ENCODE measurements at regions of chr11 and their contacts with region 1.

Region 1: GRCh38 chr11:68010090-68011041 is at the start of gene ALDH3B1:
- DNase-seq: peak; percentile 97 to 100
- H3K4me3 ChIP-seq: peak within 1 kb of the TSS; percentile 49 to 54
- H3K27ac ChIP-seq: peak within 1 kb of the TSS; percentile 93 to 94
- H3K4me1 ChIP-seq: peaks cover 4 to 75% (median 64%) of the 10 kb centered on the region in 4 donors
- H3K27me3 ChIP-seq: no peaks in the 10 kb centered on the region
- CTCF ChIP-seq: no peak

Region 2: DNA sequence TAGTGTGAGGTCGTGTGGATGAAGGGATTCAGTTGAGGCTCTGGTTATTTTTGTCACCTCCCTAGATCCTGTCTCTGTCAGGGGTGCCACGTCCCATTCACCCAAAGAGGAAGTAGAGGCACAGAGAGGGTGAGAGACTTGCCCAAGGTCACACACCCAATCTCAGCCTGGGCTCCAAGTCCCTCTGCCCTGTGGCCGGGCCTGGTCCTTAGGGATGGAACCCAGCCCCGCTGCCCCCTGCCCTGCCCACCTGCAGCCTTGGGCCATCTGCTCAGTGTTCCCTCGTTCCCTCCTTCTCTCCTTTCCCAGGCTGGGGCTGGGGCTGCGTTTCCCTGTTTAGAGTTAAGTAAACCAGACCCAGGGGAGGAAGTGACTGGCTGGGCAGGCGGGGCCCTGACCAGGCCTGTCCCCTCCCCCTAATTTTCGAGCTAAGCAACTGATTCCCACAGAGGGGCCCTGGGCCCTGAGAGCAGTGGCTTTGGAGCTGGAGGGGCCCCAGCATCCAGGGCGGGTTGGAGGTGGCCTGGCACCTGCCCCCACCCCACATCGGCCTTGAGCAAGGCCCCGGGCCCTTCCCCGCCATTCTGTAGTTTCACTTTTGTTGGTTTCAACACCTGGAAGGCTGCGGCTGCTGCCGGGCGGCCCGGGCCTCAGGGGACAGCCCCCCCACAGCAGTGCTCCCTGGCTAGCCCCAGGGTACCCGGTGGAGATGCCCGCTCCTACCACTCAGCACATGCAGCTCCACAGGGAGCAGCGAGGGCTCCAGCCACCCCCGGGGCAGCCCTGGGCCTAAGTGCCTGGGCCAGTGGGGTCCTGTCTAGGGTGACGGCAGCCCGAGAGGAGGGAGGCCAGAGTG is 30.0 kb after region 1 on chr11:
- intact Hi-C with region 1: loop called (anchors 5 kb)
- DNase-seq: peak; percentile 84 to 87
- H3K4me3 ChIP-seq: peak overlapping the region; percentile 63 to 80
- H3K27ac ChIP-seq: peak overlapping the region; percentile 78 to 94
- H3K4me1 ChIP-seq: peaks cover 0 to 50% (median 41%) of the 10 kb centered on the region in 4 donors
- H3K27me3 ChIP-seq: no peaks in the 10 kb centered on the region
- CTCF ChIP-seq: no peak

Region 3: DNA sequence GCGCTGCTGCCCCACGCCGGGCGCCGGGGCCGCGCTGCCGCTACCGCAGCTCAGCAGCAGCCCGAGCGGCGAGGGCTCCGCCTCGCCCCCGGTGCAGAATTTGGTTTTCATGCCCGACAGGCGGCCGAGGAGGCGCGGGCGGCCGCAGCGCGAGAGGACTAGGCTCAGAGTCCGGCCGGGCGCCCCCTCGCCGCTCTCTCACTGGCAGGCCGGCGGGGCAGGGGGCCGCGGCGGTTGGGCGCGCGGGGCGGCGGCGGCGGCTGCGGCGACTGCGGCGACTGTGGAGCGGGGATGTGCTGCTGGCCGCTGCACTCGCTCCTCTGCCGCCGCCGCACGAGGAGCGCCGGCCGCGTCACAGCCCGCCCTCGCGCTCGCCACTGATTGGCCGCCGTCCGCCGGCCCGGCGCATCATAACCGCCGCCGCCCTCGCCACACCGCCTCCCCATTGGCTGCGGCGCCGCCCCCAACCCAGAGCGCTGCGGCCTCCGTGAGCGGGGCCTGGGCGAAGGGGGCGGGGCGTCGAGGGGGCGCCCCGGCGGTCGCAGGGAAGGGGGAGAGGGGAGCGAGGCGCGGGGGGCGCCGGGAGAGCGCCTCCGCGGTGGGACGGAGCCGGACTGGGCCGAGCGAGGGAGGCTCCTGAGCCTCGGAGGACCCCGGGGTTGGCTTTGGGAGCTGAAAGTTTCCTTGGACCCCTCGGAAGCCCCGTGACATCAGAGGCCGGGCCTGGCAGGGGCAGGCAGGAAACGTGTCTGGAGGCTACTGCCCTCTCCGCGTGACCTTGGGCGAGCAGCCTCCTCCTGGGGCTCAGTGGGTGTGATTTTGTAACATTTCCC is 110.9 kb after region 1 on chr11 and contains the start of gene CHKA:
- intact Hi-C with region 1: loop called (anchors 5 kb)
- DNase-seq: peak; percentile 91 to 95
- H3K4me3 ChIP-seq: peak within 1 kb of the TSS; percentile 67 to 71
- H3K27ac ChIP-seq: peak within 1 kb of the TSS; percentile 98 to 99
- H3K4me1 ChIP-seq: peaks cover 0 to 34% (median 18%) of the 10 kb centered on the region in 4 donors
- H3K27me3 ChIP-seq: no peaks in the 10 kb centered on the region
- CTCF ChIP-seq: no peak

Region 4: DNA sequence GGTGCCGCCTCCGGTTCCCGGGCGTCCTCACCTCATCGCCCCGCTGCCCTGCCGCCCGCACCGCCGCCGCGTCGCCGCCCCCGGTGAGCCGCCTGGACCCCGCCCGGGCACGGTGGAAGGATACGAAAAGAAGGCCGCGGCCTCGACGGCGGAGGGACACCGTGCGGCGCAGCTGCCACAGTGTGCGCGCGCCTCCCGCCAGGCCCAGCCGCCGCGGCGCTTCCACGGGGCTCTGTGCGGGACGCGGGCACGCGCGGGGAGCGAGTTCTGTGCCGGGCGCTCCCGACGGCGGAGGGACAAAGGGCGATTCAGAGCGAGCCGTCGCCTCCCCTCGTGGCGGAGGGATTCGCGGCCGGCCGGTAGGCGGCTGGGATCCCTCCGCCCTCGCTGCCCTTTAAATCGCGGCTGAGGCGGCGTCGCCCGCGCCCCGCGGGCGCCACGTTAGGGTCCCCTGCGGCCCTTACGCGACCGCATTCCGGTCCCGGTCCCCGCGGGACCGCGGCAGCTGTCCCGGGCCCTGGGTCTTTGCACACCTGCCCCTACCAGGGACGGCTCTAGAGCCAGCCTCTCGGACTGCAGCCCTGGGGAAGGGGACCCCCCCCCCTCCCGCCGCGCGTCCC is 203.3 kb after region 1 on chr11:
- intact Hi-C with region 1: loop called (anchors 5 kb)
- DNase-seq: peak; percentile 79 to 93
- H3K4me3 ChIP-seq: peak overlapping the region; percentile 67 to 95
- H3K27ac ChIP-seq: peak overlapping the region; percentile 97 to 98
- H3K4me1 ChIP-seq: peaks cover 0 to 50% (median 32%) of the 10 kb centered on the region in 4 donors
- H3K27me3 ChIP-seq: no peaks in the 10 kb centered on the region
- CTCF ChIP-seq: peak; percentile 8 to 16

Region 5: GRCh38 chr11:68282141-68282970 is 272.0 kb after region 1 on chr11:
- intact Hi-C with region 1: no loop called
- DNase-seq: no peak
- H3K4me3 ChIP-seq: no peak overlapping the region
- H3K27ac ChIP-seq: no peak overlapping the region
- H3K4me1 ChIP-seq: no peaks in the 10 kb centered on the region
- H3K27me3 ChIP-seq: no peaks in the 10 kb centered on the region
- CTCF ChIP-seq: no peak

Measured in tibial artery (tissue), 4 donors.